Activated CD4-positive, alpha-beta T cell treated with anti-CD3 and anti-CD28 coated beads, Interleukin-2, amount 10 ng/mL, durations not matched to agents 24 days and 14 days (primary cell): ENCODE measurements at regions of chr19 and their contacts with region 1.

Region 1: DNA sequence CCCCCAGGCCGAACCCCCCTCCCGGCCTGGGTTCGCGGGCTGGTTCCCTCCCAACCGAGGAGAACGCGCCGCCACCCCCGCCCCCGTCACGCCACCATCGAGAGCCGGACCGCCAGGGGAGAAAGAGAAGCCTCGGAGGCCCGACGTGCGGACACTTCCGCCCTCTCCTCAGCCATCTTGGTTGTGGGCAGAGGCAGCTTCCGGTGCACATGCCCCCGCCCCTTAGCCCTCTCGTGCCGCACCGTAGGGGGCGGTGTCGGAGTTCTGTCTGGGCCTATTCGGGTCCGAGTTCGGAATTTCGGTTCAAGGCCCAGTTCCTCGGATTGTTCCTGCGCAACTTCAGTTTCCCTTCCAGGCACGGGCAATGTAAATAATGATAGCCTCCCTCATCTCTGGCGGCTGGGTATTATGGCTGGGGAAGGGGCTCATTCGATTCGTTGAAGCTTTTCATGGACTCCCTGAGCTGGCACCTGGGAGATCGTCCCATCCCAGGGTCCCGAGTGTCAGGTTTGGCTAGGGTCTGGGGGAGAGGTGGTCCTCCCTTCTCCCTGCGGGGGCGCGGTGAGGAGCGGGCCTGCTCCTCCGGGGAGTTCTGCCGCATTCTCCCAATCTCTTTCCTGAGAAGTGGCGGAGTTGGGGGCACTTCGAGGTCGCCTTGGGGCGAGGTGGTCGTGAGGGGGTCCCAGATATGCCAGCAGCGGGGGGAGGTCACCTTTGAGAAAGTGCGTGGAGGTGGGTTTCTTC is at the starts of genes IER2 and STX10:
- DNase-seq: peak; percentile 98
- H3K4me3 Mint-ChIP-seq: peak within 1 kb of the TSS; percentile 100
- H3K27ac Mint-ChIP-seq: peak within 1 kb of the TSS; percentile 100
- H3K4me1 Mint-ChIP-seq: peaks cover 30% of the 10 kb centered on the region
- H3K27me3 Mint-ChIP-seq: peaks cover 2% of the 10 kb centered on the region
- total RNA-seq, gene IER2: 161 TPM in 2 replicates
- total RNA-seq, gene STX10: 66.2 and 73.5 TPM in 2 replicates

Region 2: GRCh38 chr19:12938234-12939025 is 211.9 kb before region 1 on chr19 and contains the start of gene CALR:
- intact Hi-C with region 1: loop called (anchors 1 kb)
- DNase-seq: peak; percentile 100
- H3K4me3 Mint-ChIP-seq: peak within 1 kb of the TSS; percentile 98
- H3K27ac Mint-ChIP-seq: peak within 1 kb of the TSS; percentile 91
- H3K4me1 Mint-ChIP-seq: peaks cover 44% of the 10 kb centered on the region
- H3K27me3 Mint-ChIP-seq: no peaks in the 10 kb centered on the region
- total RNA-seq, gene CALR: 987 and 994 TPM in 2 replicates

Region 3: GRCh38 chr19:13117772-13118423 is 32.5 kb before region 1 on chr19 and contains the start of gene NACC1:
- intact Hi-C with region 1: loop called (anchors 1 kb)
- DNase-seq: peak; percentile 98
- H3K4me3 Mint-ChIP-seq: peak within 1 kb of the TSS; percentile 97
- H3K27ac Mint-ChIP-seq: peak within 1 kb of the TSS; percentile 97
- H3K4me1 Mint-ChIP-seq: peaks cover 39% of the 10 kb centered on the region
- H3K27me3 Mint-ChIP-seq: no peaks in the 10 kb centered on the region
- total RNA-seq, gene NACC1: 118 and 121 TPM in 2 replicates

Region 4: GRCh38 chr19:13162518-13163314 is 12.4 kb after region 1 on chr19:
- intact Hi-C with region 1: loop called (anchors 1 kb)
- DNase-seq: peak; percentile 98
- H3K4me3 Mint-ChIP-seq: peak overlapping the region; percentile 89
- H3K27ac Mint-ChIP-seq: peak overlapping the region; percentile 95
- H3K4me1 Mint-ChIP-seq: peaks cover 57% of the 10 kb centered on the region
- H3K27me3 Mint-ChIP-seq: no peaks in the 10 kb centered on the region

Region 5: GRCh38 chr19:13839130-13839937 is 689.0 kb after region 1 on chr19:
- intact Hi-C with region 1: loop called (anchors 5 kb)
- DNase-seq: peak; percentile 94
- H3K4me3 Mint-ChIP-seq: peak overlapping the region; percentile 94
- H3K27ac Mint-ChIP-seq: peak overlapping the region; percentile 89
- H3K4me1 Mint-ChIP-seq: peaks cover 37% of the 10 kb centered on the region
- H3K27me3 Mint-ChIP-seq: no peaks in the 10 kb centered on the region